ENCODE measurements at regions of chr9 and their contacts with region 1.

Region 1: DNA sequence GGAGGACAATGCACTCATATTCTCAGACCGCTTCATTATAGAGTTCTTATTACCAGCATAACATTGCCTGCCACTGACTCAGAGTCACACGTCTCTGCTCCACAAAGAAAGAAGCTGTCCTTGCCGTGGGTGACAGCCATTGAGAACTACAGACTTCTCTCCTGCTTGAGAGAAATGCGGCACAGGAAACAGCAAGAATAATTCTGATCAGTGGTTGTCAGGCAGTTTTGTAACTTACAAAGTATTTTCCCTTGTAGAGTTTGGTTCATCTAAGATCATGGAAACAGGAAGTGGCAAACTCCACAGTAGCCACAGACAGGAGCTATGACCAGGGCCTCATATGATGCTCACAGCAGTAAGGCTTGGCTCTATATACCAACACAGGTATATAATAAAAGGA is 47.0 kb downstream of the KCNV2 start:
- DNase-seq: peak; percentile 33
- H3K4me3 Mint-ChIP-seq: no peak overlapping the region
- H3K27ac Mint-ChIP-seq: peak overlapping the region; percentile 81
- H3K4me1 Mint-ChIP-seq: peaks cover 23% of the 10 kb centered on the region
- H3K27me3 Mint-ChIP-seq: no peaks in the 10 kb centered on the region

Region 2: DNA sequence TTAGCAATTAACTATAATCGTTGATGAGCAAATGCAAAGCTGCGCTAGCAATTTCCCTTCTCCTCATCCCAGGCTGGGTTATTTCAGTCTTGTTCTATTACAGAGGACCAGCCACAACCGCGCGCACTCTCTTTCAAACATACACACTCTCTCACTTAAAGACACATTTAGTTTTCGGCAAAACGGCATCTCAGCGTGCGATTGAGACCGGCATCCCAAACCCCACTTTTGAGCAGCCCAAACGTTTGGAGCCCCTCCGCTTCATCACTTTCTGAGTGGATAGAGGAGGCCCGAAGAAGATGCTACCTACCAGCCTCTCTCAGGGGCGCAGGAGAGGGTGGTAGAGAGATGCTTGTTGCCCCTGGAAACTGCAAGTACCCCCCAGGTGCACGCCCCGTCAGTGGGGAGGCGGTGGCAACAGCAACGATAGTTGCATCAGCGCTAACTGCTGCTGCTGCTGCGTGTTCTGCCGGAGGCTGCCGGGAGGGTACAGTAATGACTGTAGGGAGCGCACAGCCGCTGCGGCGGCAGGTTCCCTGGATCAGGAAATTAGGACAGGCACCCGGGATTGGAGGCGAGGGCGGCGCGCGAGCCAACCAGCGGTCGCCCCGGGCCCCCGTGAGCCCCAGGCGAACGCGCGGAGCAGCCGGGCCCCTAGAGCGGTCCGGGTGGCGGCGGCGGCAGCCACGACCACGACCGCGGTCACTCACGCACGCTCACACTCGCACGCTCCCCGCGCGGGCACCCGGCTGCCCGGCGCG is 143.3 kb before region 1 on chr9:
- CTCF ChIA-PET with region 1: no interaction called
- POLR2A ChIA-PET with region 1: no interaction called
- intact Hi-C with region 1: loop called (anchors 2 kb)
- DNase-seq: peak; percentile 86
- H3K4me3 Mint-ChIP-seq: peak overlapping the region; percentile 75
- H3K27ac Mint-ChIP-seq: peak overlapping the region; percentile 28
- H3K4me1 Mint-ChIP-seq: peaks cover 14% of the 10 kb centered on the region
- H3K27me3 Mint-ChIP-seq: peaks cover 49% of the 10 kb centered on the region

Region 3: GRCh38 chr9:2677915-2678889 is 86.2 kb before region 1 on chr9:
- CTCF ChIA-PET with region 1: no interaction called
- POLR2A ChIA-PET with region 1: no interaction called
- intact Hi-C with region 1: no loop called
- DNase-seq: no peak
- H3K4me3 Mint-ChIP-seq: no peak overlapping the region
- H3K27ac Mint-ChIP-seq: no peak overlapping the region
- H3K4me1 Mint-ChIP-seq: no peaks in the 10 kb centered on the region
- H3K27me3 Mint-ChIP-seq: peaks cover 3% of the 10 kb centered on the region

Region 4: GRCh38 chr9:2780846-2781245 is 16.5 kb after region 1 on chr9:
- CTCF ChIA-PET with region 1: no interaction called
- POLR2A ChIA-PET with region 1: no interaction called
- intact Hi-C with region 1: no loop called
- DNase-seq: no peak
- H3K4me3 Mint-ChIP-seq: no peak overlapping the region
- H3K27ac Mint-ChIP-seq: no peak overlapping the region
- H3K4me1 Mint-ChIP-seq: no peaks in the 10 kb centered on the region
- H3K27me3 Mint-ChIP-seq: no peaks in the 10 kb centered on the region

Region 5: DNA sequence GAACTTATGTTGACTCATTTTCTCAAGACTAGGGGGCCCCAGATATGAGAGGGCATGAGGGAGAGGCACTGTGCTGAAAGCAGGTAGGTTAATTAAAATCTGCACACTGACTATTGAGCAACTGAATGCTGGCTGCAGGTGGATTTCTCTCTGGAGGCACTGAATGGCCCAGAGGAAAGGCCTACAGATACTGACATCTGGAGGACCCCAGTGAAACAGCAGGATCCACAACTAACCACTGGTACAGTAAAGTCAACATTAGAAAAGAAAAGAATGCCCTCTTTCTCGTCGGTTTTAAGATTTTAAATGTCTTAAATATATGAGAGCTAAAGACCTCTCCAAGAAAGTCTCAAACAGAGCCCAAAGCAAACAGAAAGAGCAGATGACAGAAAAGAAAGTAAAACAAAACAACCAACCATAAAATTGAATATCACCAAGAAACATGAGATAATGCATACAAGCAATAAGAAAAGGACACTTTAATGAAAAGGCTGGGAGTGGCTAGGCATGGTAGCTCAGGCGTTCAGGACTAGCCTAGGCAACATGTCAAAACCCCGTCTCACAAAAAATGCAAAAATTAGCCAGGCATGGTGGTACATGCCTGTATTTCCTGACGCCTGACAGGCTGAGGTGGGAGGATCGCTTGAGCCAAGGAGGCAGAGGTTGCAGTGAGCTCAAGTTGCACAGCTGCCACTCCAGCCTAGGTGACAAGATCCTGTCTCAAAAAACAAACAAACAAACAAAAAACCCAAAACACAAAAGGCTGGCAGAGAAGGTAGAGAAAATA is 36.2 kb after region 1 on chr9:
- CTCF ChIA-PET with region 1: no interaction called
- POLR2A ChIA-PET with region 1: no interaction called
- intact Hi-C with region 1: no loop called
- DNase-seq: no peak
- H3K4me3 Mint-ChIP-seq: no peak overlapping the region
- H3K27ac Mint-ChIP-seq: no peak overlapping the region
- H3K4me1 Mint-ChIP-seq: peaks cover 17% of the 10 kb centered on the region
- H3K27me3 Mint-ChIP-seq: no peaks in the 10 kb centered on the region

Region 6: GRCh38 chr9:3001311-3001710 is 237.0 kb after region 1 on chr9:
- CTCF ChIA-PET with region 1: no interaction called
- POLR2A ChIA-PET with region 1: no interaction called
- intact Hi-C with region 1: no loop called
- DNase-seq: no peak
- H3K4me3 Mint-ChIP-seq: no peak overlapping the region
- H3K27ac Mint-ChIP-seq: no peak overlapping the region
- H3K4me1 Mint-ChIP-seq: no peaks in the 10 kb centered on the region
- H3K27me3 Mint-ChIP-seq: peaks cover 3% of the 10 kb centered on the region